Mammary epithelial cell (primary cell): ENCODE measurements at regions of chr10 and their contacts with region 1.

Region 1: DNA sequence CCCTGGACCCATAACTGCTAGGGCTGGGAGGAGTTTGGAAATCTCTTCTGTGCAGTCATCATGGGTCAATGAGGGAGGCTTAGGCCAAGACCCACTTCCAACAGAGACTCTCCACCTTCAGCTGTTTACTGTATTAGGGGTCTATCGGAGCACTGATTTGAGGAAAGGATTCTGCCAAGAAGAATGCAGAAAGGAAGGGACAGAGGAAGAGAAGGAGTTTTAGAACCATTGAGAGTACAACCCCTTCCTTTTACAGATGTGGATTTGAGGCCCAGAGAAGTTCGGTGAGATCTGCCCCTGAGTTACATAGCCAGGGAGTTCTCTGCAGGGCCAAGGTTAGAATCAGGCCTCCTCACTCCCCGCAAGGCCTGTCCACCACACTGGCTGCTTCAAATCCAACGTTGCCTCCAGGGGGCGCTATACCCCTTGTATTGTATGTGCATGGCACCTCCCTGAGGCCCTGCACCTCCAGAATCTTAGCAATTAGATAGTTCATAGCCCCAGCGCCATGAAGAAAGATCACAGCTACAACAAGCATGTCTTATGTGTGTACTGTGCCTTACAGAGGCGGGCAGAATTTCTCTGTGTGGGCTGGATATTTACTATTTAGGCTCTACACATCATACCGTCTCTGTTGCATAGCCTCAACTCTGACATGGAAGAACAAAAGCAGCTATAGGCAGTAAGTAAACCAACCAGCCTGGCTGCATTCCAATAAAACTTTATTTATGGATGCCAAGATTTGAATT is 246.8 kb downstream of the SKIDA1 start:
- DNase-seq: peak; percentile 78
- H3K4me3 ChIP-seq: no peak overlapping the region
- H3K27ac ChIP-seq: no peak overlapping the region
- H3K4me1 ChIP-seq: peaks cover 4% of the 10 kb centered on the region
- H3K27me3 ChIP-seq: no peaks in the 10 kb centered on the region
- CTCF ChIP-seq: peak; percentile 66 to 84

Region 2: GRCh38 chr10:21336476-21337170 is 58.0 kb after region 1 on chr10:
- CTCF ChIA-PET with region 1: no interaction called
- dilution Hi-C with region 1: no loop called
- in situ Hi-C with region 1: no loop called
- intact Hi-C with region 1: loop called (anchors 1 kb)
- DNase-seq: peak; percentile 90
- H3K4me3 ChIP-seq: peak overlapping the region; percentile 0 to 15 (median 8)
- H3K27ac ChIP-seq: peak overlapping the region; percentile 53
- H3K4me1 ChIP-seq: peaks cover 30% of the 10 kb centered on the region
- H3K27me3 ChIP-seq: no peaks in the 10 kb centered on the region
- CTCF ChIP-seq: peak in 1 of 2 donors; percentile 26

Region 3: DNA sequence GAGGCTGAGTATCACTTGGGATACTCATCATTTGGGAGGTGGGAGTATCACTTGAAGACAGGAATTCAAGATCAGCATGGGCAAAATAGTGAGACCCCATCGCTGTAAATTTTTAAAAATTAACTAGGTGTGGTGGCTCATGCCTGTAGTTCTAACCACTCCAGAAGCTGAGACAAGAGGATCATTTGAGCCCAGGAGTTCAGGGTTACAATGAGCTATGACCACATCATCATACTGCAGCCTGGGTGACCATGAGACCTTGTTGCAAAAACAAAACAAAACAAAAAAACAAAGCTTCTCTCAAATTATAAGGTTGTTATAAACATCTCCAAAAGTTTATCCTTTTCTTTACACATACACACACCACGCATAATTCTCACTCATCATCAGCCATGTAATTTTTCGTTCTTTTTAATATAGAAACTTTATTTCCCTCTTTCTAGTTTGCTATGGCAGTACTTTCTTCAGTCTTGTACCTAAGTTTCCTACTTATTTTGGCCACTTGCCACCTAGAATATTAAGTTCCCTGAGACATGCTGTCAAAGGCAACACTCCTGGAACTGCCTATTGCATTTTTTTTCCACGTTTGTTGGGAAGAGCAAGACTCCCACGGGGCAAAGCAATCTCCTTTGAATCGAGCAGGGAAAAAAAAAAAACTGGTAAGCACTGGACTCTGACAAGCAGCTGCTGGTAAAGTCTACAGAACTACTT is 209.7 kb after region 1 on chr10:
- CTCF ChIA-PET with region 1: no interaction called
- dilution Hi-C with region 1: no loop called
- in situ Hi-C with region 1: loop called (anchors 10 kb)
- intact Hi-C with region 1: no loop called
- DNase-seq: no peak
- H3K4me3 ChIP-seq: no peak overlapping the region
- H3K27ac ChIP-seq: no peak overlapping the region
- H3K4me1 ChIP-seq: no peaks in the 10 kb centered on the region
- H3K27me3 ChIP-seq: no peaks in the 10 kb centered on the region
- CTCF ChIP-seq: no peak

Region 4: DNA sequence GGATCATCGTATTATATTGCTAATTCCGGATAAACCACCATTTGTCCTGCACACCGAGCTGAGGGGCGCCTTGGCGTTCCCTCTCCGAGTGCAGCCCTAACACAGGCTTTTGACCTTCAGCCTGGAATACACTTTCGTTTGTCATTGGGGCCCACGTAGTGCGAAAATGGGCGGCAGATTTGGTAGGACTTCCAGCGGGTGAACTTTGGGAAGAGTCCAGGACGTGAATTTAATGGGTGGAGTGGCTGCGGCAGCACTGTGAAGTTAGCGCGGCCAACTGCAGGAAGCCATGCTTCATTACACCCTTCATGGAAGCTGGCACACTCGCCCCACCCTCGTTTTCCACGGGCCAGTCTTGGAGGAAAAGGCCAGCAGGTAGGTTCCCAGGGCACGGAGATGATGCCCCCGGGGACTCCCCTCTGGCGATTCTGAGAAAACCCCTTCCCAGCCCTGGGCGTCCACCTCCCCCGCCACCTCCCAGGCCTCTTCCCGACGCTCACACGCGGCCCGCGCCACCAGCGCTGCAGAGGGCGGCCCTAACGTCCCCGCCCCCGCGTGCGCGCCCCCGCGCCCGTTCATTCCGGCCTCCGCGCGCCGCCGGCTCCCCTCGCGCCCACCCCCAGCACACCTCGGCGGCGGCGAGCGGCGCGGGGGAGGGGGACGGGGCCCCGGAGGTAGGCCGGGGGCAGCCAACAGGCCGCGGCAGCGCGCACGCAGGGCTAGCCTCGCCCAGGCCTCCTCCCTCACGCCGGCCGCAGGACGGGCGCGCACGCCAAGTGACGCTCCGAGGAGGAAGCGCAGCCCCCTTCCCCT is 255.0 kb after region 1 on chr10 and contains the start of gene MLLT10:
- CTCF ChIA-PET with region 1: no interaction called
- dilution Hi-C with region 1: no loop called
- in situ Hi-C with region 1: no loop called
- intact Hi-C with region 1: loop called (anchors 1 kb)
- DNase-seq: peak; percentile 92
- H3K4me3 ChIP-seq: peak within 1 kb of the TSS; percentile 47 to 63 (median 59)
- H3K27ac ChIP-seq: peak within 1 kb of the TSS; percentile 74
- H3K4me1 ChIP-seq: peaks cover 12% of the 10 kb centered on the region
- H3K27me3 ChIP-seq: no peaks in the 10 kb centered on the region
- CTCF ChIP-seq: peak; percentile 15 to 39
- total RNA-seq, gene MLLT10: 33.7 to 38.2 TPM

Region 5: DNA sequence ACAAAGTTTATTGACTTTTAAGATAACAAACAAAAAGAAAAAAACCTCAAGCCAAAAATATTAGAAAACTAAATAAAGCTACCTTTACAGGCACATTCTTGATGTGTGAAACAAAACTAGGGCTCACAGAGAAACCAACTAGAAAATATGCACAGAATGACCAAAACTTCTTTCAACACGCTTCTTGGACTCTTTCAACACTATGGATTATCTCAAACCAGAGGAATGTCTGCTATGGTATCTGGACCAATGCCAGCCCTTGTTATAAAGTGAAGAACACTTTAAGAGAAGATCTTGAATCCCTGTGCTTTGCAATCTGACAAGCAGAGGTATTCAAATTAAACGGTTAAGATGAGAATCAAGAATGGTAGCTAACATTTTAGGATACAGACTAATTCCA is 648.3 kb after region 1 on chr10:
- CTCF ChIA-PET with region 1: no interaction called
- dilution Hi-C with region 1: no loop called
- in situ Hi-C with region 1: loop called (anchors 25 kb)
- intact Hi-C with region 1: no loop called
- DNase-seq: peak; percentile 91
- H3K4me3 ChIP-seq: peak overlapping the region in 1 of 3 experiments; percentile 25
- H3K27ac ChIP-seq: peak overlapping the region; percentile 88
- H3K4me1 ChIP-seq: peaks cover 35% of the 10 kb centered on the region
- H3K27me3 ChIP-seq: no peaks in the 10 kb centered on the region
- CTCF ChIP-seq: no peak

Region 6: GRCh38 chr10:22997102-22997501 is 1718.4 kb after region 1 on chr10:
- CTCF ChIA-PET with region 1: no interaction called
- dilution Hi-C with region 1: no loop called
- in situ Hi-C with region 1: no loop called
- intact Hi-C with region 1: loop called (anchors 10 kb)
- DNase-seq: peak; percentile 16
- H3K4me3 ChIP-seq: no peak overlapping the region
- H3K27ac ChIP-seq: no peak overlapping the region
- H3K4me1 ChIP-seq: no peaks in the 10 kb centered on the region
- H3K27me3 ChIP-seq: peaks cover 4% of the 10 kb centered on the region
- CTCF ChIP-seq: no peak